GM18951 (cell line): ENCODE measurements at regions of chr2 and their contacts with region 1.

Region 1: GRCh38 chr2:219308142-219309093 is 783 bp downstream of the PTPRN start:
- POLR2A ChIP-seq: no peak

Region 2: GRCh38 chr2:219155054-219155644 is 153.3 kb before region 1 on chr2:
- in situ Hi-C with region 1: loop called (anchors 10 kb)
- POLR2A ChIP-seq: no peak